ENCODE measurements at regions of chr7 and their contacts with region 1.

Region 1: DNA sequence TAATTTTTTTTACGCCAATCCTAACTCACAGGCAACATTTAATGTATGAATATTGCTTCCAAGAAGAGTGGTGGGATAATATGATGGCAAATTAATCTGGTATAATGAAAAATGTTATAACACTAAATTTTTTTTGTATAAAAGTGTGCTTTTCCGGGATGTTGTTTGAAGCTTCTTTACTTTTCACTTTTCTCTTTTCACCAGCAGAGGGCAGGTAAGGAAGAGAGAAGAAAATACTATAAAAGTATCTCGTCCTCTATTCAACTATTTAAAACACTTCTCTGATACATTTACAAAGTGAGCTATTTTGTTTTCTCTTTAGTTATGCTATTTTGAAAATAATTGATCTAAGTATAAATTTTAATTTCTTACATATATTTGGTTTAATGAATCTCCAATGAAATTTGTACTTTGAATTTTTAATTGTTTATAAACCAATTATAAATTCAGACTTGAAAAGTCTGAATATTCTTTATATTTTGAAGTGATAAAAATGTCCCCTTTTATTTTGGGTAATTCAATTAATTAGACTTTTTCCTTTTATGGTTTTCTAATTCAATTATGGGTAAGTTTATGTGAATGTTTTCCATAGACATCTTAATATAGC is 20.7 kb upstream of the CFTR start:
- DNase-seq: peak; percentile 21
- ATAC-seq: no peak
- H3K4me3 ChIP-seq: no peak overlapping the region
- H3K27ac ChIP-seq: no peak overlapping the region
- H3K4me1 ChIP-seq: no peaks in the 10 kb centered on the region
- H3K27me3 ChIP-seq: no peaks in the 10 kb centered on the region
- CTCF ChIP-seq: peak; percentile 53 to 63 (median 60); a peak in 5 of 6 replicates
- POLR2A ChIP-seq: no peak
- RAD21 ChIP-seq: peak; percentile 66

Region 2: DNA sequence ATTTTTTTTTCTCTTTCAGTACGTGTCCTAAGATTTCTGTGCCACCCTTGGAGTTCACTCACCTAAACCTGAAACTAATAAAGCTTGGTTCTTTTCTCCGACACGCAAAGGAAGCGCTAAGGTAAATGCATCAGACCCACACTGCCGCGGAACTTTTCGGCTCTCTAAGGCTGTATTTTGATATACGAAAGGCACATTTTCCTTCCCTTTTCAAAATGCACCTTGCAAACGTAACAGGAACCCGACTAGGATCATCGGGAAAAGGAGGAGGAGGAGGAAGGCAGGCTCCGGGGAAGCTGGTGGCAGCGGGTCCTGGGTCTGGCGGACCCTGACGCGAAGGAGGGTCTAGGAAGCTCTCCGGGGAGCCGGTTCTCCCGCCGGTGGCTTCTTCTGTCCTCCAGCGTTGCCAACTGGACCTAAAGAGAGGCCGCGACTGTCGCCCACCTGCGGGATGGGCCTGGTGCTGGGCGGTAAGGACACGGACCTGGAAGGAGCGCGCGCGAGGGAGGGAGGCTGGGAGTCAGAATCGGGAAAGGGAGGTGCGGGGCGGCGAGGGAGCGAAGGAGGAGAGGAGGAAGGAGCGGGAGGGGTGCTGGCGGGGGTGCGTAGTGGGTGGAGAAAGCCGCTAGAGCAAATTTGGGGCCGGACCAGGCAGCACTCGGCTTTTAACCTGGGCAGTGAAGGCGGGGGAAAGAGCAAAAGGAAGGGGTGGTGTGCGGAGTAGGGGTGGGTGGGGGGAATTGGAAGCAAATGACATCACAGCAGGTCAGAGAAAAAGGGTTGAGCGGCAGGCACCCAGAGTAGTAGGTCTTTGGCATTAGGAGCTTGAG is 20.4 kb after region 1 on chr7 and contains the start of gene CFTR:
- CTCF ChIA-PET with region 1: interaction called, 10 read pairs
- POLR2A ChIA-PET with region 1: no interaction called
- RAD21 ChIA-PET with region 1: no interaction called
- intact Hi-C with region 1: no loop called
- DNase-seq: no peak
- ATAC-seq: no peak
- H3K4me3 ChIP-seq: no peak within 1 kb of the TSS
- H3K27ac ChIP-seq: no peak within 1 kb of the TSS
- H3K4me1 ChIP-seq: no peaks in the 10 kb centered on the region
- H3K27me3 ChIP-seq: no peaks in the 10 kb centered on the region
- CTCF ChIP-seq: no peak
- POLR2A ChIP-seq: no peak
- RAD21 ChIP-seq: no peak
- total RNA-seq, gene CFTR: not detected

Region 3: DNA sequence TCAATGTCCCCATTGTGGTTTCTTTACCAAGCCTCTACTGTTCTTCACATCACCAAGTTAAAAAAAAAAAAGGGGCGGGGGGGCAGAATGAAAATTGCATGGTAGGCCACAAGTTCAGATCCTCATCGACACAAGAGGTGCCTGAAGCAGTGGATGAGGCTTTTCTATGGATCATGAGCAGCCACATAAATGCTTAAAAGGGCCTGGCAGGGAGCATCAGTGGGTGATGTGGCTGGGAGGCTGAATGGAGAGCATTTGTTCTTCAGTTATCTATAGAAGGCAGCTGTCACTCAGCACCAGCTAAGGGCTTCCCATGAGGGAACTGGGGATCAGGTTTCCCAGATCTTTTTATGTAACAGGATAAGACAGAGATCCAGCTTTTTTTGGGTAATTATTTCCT is 138.7 kb after region 1 on chr7:
- CTCF ChIA-PET with region 1: no interaction called
- POLR2A ChIA-PET with region 1: no interaction called
- RAD21 ChIA-PET with region 1: no interaction called
- intact Hi-C with region 1: no loop called
- DNase-seq: no peak
- ATAC-seq: no peak
- H3K4me3 ChIP-seq: no peak overlapping the region
- H3K27ac ChIP-seq: no peak overlapping the region
- H3K4me1 ChIP-seq: no peaks in the 10 kb centered on the region
- H3K27me3 ChIP-seq: no peaks in the 10 kb centered on the region
- CTCF ChIP-seq: no peak
- POLR2A ChIP-seq: no peak
- RAD21 ChIP-seq: no peak

Region 4: GRCh38 chr7:117673839-117674238 is 214.8 kb after region 1 on chr7:
- CTCF ChIA-PET with region 1: interaction called, 4 read pairs
- POLR2A ChIA-PET with region 1: no interaction called
- RAD21 ChIA-PET with region 1: no interaction called
- intact Hi-C with region 1: loop called (anchors 2 kb)
- DNase-seq: peak; percentile 24
- ATAC-seq: peak; percentile 77
- H3K4me3 ChIP-seq: no peak overlapping the region
- H3K27ac ChIP-seq: no peak overlapping the region
- H3K4me1 ChIP-seq: no peaks in the 10 kb centered on the region
- H3K27me3 ChIP-seq: no peaks in the 10 kb centered on the region
- CTCF ChIP-seq: peak; percentile 31 to 54 (median 51); a peak in 4 of 6 replicates
- POLR2A ChIP-seq: no peak
- RAD21 ChIP-seq: peak; percentile 56

Region 5: DNA sequence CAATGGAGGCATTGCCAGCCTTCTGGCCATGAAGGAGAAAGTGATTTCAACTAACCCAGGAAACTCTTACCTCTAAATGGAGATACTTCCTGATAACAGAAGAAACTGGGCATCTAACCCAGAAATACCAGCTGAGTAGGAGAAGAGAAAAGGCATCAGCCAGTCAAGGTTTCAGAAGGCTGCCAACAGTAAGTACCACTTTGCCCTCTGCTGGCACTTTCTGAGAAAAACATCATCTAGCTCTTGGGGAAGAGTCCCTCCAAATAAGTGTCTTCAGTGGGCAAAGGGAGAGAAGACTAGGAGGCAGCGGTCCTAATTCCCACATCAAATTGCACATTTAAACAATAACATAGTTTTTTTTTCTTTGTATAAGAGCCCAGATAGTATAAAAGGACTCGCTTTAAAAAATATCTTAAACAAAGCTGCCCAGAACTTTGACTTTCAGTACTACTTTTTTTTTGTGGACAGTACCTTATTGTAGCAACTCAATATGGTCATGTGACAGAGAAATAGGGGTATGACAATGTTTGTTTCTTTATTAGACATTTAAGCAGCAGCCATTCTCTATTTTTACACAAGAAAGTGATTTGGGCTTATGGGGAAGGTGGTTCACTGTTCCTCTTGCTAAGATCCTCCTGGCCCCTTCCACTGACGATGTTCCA is 256.8 kb after region 1 on chr7:
- CTCF ChIA-PET with region 1: interaction called, 24 read pairs
- POLR2A ChIA-PET with region 1: no interaction called
- RAD21 ChIA-PET with region 1: interaction called in 1 of 2 experiments, 4 read pairs
- intact Hi-C with region 1: loop called (anchors 1 kb)
- DNase-seq: peak; percentile 26
- ATAC-seq: peak; percentile 85
- H3K4me3 ChIP-seq: no peak overlapping the region
- H3K27ac ChIP-seq: no peak overlapping the region
- H3K4me1 ChIP-seq: no peaks in the 10 kb centered on the region
- H3K27me3 ChIP-seq: no peaks in the 10 kb centered on the region
- CTCF ChIP-seq: peak; percentile 62 to 69 (median 64); a peak in 5 of 6 replicates
- POLR2A ChIP-seq: no peak
- RAD21 ChIP-seq: peak; percentile 75

Region 6: DNA sequence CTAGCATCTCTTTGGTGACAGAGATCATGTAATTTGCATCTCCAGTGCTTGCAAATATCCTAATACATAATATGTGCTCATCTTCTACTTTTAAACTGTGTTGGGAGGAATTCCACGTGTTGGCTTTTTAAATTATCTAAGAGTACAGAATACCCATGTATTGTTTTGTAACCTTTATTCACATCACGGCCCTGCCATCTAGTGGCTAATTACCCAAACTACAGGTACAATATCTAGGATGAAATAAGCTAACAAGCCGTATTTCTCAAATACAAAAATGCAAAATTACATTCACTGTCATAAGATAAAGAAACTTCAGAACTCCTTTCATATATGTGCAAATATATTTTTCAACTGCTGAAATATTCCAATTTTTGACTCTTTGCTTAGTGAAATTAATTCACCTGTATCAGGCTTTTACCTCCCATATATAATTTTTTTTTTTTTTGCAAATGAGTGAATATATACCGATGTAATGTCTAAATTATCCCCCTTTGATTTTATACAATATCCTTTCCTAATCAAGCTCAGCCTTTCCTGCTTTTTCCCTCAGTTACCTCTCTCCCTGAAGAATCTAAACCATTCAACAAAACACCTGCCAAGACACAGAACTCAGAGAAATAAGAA is 694.6 kb after region 1 on chr7:
- CTCF ChIA-PET with region 1: interaction called, 7 read pairs
- POLR2A ChIA-PET with region 1: no interaction called
- RAD21 ChIA-PET with region 1: no interaction called
- intact Hi-C with region 1: loop called (anchors 5 kb)
- DNase-seq: peak; percentile 28
- ATAC-seq: peak; percentile 54; the same call in 1 of the 2 replicates
- H3K4me3 ChIP-seq: no peak overlapping the region
- H3K27ac ChIP-seq: no peak overlapping the region
- H3K4me1 ChIP-seq: no peaks in the 10 kb centered on the region
- H3K27me3 ChIP-seq: no peaks in the 10 kb centered on the region
- CTCF ChIP-seq: peak; percentile 47 to 83 (median 61); a peak in 5 of 6 replicates
- POLR2A ChIP-seq: no peak
- RAD21 ChIP-seq: peak; percentile 74

Measured in HCT116 (cell line).